ENCODE measurements at regions of chr3 and their contacts with region 1.

Region 1: GRCh38 chr3:155701882-155702465 is 42.9 kb downstream of the PLCH1 start:
- DNase-seq: no peak
- H3K4me3 ChIP-seq: no peak overlapping the region
- H3K27ac ChIP-seq: no peak overlapping the region
- H3K4me1 ChIP-seq: peaks cover 0 to 4% of the 10 kb centered on the region in 2 donors
- H3K27me3 ChIP-seq: no peaks in the 10 kb centered on the region
- CTCF ChIP-seq: peak; percentile 58 to 77 (median 65)
- POLR2A ChIP-seq: no peak

Region 2: GRCh38 chr3:155352900-155353490 is 349.0 kb before region 1 on chr3:
- intact Hi-C with region 1: loop called (anchors 5 to 10 kb)
- DNase-seq: no peak
- H3K4me3 ChIP-seq: no peak overlapping the region
- H3K27ac ChIP-seq: no peak overlapping the region
- H3K4me1 ChIP-seq: no peaks in the 10 kb centered on the region
- H3K27me3 ChIP-seq: no peaks in the 10 kb centered on the region
- CTCF ChIP-seq: peak; percentile 12 to 61 (median 44)
- POLR2A ChIP-seq: no peak

Measured in adrenal gland (tissue), 19 donors.